ENCODE measurements at regions of chr19 and their contacts with region 1.

Region 1: GRCh38 chr19:34034318-34034846 is 137.9 kb upstream of the LSM14A start:
- DNase-seq: no peak
- H3K4me3 ChIP-seq: no peak overlapping the region
- H3K27ac ChIP-seq: no peak overlapping the region
- H3K4me1 ChIP-seq: no peaks in the 10 kb centered on the region
- H3K27me3 ChIP-seq: no peaks in the 10 kb centered on the region
- CTCF ChIP-seq: no peak
- EP300 ChIP-seq: no peak
- POLR2A ChIP-seq: no peak

Region 2: DNA sequence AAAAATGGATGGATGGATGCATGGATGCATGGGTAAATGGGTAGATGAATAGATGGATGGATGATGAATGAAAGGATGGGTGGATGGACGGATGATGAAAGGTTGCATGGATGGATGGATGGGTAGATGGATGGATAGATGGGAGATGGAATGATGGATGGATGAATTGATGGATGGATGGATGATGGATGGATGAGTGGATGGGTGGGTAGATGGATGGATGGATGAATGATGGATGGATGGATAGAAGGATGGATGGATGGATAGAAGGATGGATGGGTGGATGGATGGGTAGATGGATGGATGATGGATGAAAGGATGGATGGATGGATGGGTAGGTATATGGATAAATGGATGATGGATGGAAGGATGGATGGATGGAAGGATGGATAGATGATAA is 22.8 kb after region 1 on chr19:
- in situ Hi-C with region 1: no loop called
- intact Hi-C with region 1: loop called (anchors 1 kb)
- DNase-seq: no peak
- H3K4me3 ChIP-seq: no peak overlapping the region
- H3K27ac ChIP-seq: no peak overlapping the region
- H3K4me1 ChIP-seq: no peaks in the 10 kb centered on the region
- H3K27me3 ChIP-seq: peaks cover 4% of the 10 kb centered on the region
- CTCF ChIP-seq: no peak
- EP300 ChIP-seq: no peak
- POLR2A ChIP-seq: no peak